ENCODE measurements at regions of chr2 and their contacts with region 1.

Region 1: DNA sequence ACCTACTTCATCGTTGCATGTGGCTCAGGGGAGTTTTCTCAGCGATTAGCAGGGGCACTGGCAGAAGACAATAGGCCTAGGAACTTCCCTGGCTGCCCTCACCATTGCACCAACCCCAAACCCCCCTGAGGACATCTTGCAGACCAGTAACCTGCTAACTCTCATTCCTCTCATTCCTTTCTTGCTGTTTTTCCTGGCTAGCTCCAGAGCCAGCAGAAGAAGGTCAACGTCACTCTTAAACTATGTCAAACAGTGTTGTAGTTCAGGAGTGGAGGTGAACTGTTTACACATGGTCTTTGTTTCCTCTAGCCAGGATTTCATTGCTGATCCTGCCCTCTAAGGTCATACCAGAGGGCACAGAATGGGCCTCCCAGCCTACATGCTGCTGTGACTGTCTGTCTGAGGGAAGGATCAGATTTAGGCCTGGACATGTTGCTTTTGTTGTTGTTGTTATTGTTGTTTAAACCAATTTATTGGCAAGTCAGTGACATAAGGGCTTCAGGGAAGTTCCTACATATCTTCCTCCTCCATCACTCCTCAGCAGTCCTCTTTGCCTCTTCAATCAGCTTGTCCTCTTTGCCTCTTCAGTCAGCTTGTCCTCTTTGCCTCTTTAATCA is 471.8 kb upstream of the TNP1 start:
- DNase-seq: peak; percentile 83
- H3K4me3 Mint-ChIP-seq: peak overlapping the region; percentile 24
- H3K27ac Mint-ChIP-seq: peak overlapping the region; percentile 97
- H3K4me1 Mint-ChIP-seq: peaks cover 84% of the 10 kb centered on the region
- H3K27me3 Mint-ChIP-seq: no peaks in the 10 kb centered on the region
- CTCF ChIP-seq: no peak

Region 2: DNA sequence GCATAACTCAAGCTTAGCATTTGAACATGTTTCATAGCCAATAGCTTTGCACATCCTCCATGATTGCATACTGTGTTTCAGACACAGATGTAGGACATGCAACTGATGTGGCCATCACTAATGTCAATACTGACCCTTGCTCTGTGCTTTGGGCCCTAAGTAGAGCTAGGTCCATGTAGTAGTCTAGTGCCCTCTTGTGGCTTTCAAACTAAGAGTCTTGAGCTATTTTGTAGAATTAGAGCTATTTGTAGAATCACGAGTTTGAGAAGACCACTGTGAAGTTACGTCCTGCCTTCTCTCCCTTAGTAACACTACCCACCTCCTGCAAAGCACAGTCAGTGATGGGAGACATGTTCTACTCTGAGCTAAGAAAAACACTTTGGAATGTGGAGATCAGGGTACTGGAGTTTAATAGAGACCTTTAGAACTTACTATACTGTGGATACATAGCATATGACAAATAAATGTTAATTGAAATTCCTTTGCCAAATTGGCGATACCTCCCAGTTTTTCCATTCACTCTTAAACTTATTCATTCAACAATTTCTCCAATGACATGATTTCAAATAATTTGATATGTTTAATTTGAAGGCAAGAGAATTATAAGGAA is 165.3 kb before region 1 on chr2:
- CTCF ChIA-PET with region 1: interaction called, 4 read pairs
- intact Hi-C with region 1: loop called (anchors 2 kb)
- DNase-seq: peak; percentile 25
- H3K4me3 Mint-ChIP-seq: no peak overlapping the region
- H3K27ac Mint-ChIP-seq: peak overlapping the region; percentile 47
- H3K4me1 Mint-ChIP-seq: peaks cover 31% of the 10 kb centered on the region
- H3K27me3 Mint-ChIP-seq: no peaks in the 10 kb centered on the region
- CTCF ChIP-seq: peak; percentile 43

Region 3: DNA sequence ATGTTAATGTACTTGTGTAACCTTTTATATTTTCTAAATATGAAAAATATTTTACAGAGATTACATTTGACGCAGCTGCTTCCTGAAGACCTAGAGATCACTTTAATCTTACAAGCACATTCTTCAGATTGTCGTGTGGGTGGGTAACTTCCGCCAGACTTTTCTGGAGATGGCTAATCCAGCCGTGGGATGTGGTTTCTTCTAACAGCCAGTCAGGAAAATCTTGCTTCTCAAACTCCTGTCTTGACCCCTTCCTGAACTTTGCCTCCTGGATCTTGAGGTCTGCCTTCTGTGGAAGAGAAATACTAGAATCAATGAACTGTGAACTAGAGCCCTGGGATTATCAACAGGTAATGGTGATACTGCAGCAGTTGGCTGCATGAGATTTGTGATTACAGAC is 70.2 kb before region 1 on chr2:
- CTCF ChIA-PET with region 1: no interaction called
- intact Hi-C with region 1: loop called (anchors 1 kb)
- DNase-seq: peak; percentile 58
- H3K4me3 Mint-ChIP-seq: peak overlapping the region; percentile 10
- H3K27ac Mint-ChIP-seq: peak overlapping the region; percentile 94
- H3K4me1 Mint-ChIP-seq: peaks cover 44% of the 10 kb centered on the region
- H3K27me3 Mint-ChIP-seq: no peaks in the 10 kb centered on the region
- CTCF ChIP-seq: no peak

Region 4: DNA sequence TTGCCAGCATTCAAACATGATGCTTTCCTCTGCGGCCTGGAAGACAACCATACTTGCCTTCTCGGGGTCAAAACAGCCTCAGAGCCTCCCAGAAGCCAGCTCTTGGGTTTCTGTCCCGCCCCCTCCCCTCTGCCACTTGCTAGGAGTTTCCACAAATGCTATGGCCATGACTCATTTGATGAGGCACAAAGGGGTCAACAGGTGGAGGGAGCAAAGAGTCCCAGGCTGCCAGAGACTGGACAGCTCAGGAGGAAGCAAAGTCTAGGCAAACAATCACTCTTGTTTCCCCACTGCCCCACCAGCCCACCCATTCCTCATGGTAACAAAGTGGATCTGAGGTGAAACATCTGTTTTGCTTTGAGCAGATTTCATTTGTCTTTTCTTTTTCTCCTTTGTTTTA is 120.0 kb after region 1 on chr2:
- CTCF ChIA-PET with region 1: interaction called, 3 read pairs
- intact Hi-C with region 1: loop called (anchors 2 kb)
- DNase-seq: peak; percentile 57
- H3K4me3 Mint-ChIP-seq: no peak overlapping the region
- H3K27ac Mint-ChIP-seq: peak overlapping the region; percentile 73
- H3K4me1 Mint-ChIP-seq: peaks cover 43% of the 10 kb centered on the region
- H3K27me3 Mint-ChIP-seq: no peaks in the 10 kb centered on the region
- CTCF ChIP-seq: no peak